Activated naive CD8-positive, alpha-beta T cell treated with anti-CD3 and anti-CD28 coated beads, Interleukin-2, amount 10 ng/mL, durations not matched to agents 7 days and 5 days (primary cell): ENCODE measurements at regions of chr1 and their contacts with region 1.

Region 1: GRCh38 chr1:165768513-165769394 is at the start of gene TMCO1:
- DNase-seq: peak; percentile 87
- ATAC-seq: peak; percentile 99
- H3K4me3 Mint-ChIP-seq: peak within 1 kb of the TSS; percentile 98
- H3K27ac Mint-ChIP-seq: peak within 1 kb of the TSS; percentile 100
- H3K4me1 Mint-ChIP-seq: peaks cover 42% of the 10 kb centered on the region
- H3K27me3 Mint-ChIP-seq: no peaks in the 10 kb centered on the region
- total RNA-seq, gene TMCO1: 73.7 to 79.2 TPM

Region 2: GRCh38 chr1:165616987-165617546 is 151.7 kb before region 1 on chr1:
- POLR2A ChIA-PET with region 1: no interaction called
- DNase-seq: no peak
- ATAC-seq: no peak
- H3K4me3 Mint-ChIP-seq: no peak overlapping the region
- H3K27ac Mint-ChIP-seq: no peak overlapping the region
- H3K4me1 Mint-ChIP-seq: no peaks in the 10 kb centered on the region
- H3K27me3 Mint-ChIP-seq: peaks cover 38% of the 10 kb centered on the region

Region 3: GRCh38 chr1:165697881-165698760 is 70.6 kb before region 1 on chr1 and contains the start of gene ALDH9A1:
- POLR2A ChIA-PET with region 1: interaction called, 32 read pairs
- DNase-seq: peak; percentile 92
- ATAC-seq: peak; percentile 92
- H3K4me3 Mint-ChIP-seq: peak within 1 kb of the TSS; percentile 100
- H3K27ac Mint-ChIP-seq: peak within 1 kb of the TSS; percentile 98
- H3K4me1 Mint-ChIP-seq: peaks cover 16% of the 10 kb centered on the region
- H3K27me3 Mint-ChIP-seq: peaks cover 2% of the 10 kb centered on the region
- total RNA-seq, gene ALDH9A1: 37.7 to 43.8 TPM

Region 4: DNA sequence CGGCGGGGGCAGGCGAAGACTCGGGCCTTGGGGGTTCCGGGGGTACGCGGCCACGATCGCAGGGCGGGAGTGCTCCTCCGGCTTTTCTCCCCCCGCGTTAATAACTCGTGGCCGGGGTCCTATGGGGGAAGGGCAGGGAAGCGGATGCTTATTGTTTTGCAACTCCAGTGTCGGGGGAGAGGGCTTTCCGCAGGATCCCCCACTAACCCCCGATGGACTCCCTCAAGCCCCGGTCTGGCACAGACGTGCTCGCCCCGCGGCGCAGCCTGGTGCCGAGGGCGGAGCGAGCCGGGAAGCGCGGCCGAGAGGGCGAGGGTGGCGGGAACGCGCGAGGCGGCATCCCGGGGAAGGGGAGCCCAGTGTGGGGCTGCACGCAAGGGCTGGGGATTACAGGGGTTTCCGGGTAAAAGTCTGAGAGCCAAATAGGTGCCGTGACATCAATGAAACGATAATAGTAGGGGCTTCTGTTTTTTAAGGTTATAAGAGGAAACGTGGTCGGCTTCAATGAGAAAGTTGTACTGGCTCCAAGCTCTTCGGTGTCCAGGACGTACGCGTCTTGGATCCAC is 59.4 kb after region 1 on chr1:
- POLR2A ChIA-PET with region 1: interaction called, 12 read pairs
- DNase-seq: peak; percentile 74
- ATAC-seq: peak; percentile 41
- H3K4me3 Mint-ChIP-seq: peak overlapping the region; percentile 91
- H3K27ac Mint-ChIP-seq: peak overlapping the region; percentile 67
- H3K4me1 Mint-ChIP-seq: peaks cover 17% of the 10 kb centered on the region
- H3K27me3 Mint-ChIP-seq: peaks cover 3% of the 10 kb centered on the region